ENCODE measurements at regions of chr1 and their contacts with region 1.

Region 1: DNA sequence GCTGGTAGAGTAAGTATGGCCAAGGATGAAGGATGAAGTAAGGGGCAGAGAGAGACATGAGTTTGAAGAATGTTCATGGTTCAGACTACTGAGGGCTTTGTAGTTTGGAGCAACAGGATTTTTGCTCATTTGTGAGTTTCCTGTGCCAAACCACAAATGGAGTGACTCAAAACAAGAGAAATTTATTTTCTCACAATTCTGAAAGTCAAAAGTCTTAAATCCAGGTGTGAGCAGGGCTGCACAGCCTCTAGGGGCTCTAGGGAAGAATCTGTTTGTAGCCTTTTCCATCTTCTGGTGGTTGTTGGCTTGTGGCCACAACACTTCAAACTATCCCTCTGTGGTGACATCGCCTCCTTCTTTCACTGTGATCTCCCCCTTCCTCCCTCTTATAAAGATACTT is 58.9 kb downstream of the RHOU start:
- DNase-seq: peak; percentile 59
- H3K4me3 Mint-ChIP-seq: no peak overlapping the region
- H3K27ac Mint-ChIP-seq: no peak overlapping the region
- H3K4me1 Mint-ChIP-seq: peaks cover 25% of the 10 kb centered on the region
- H3K27me3 Mint-ChIP-seq: no peaks in the 10 kb centered on the region

Region 2: GRCh38 chr1:228734881-228735801 is 59.0 kb before region 1 on chr1 and contains the start of gene RHOU:
- CTCF ChIA-PET with region 1: interaction called, 31 read pairs
- POLR2A ChIA-PET with region 1: interaction called, 19 read pairs
- DNase-seq: peak; percentile 74
- H3K4me3 Mint-ChIP-seq: peak within 1 kb of the TSS; percentile 79
- H3K27ac Mint-ChIP-seq: peak within 1 kb of the TSS; percentile 42
- H3K4me1 Mint-ChIP-seq: peaks cover 20% of the 10 kb centered on the region
- H3K27me3 Mint-ChIP-seq: peaks cover 27% of the 10 kb centered on the region
- total RNA-seq, gene RHOU: 4.5 TPM

Region 3: GRCh38 chr1:228804671-228805413 is 10.7 kb after region 1 on chr1:
- CTCF ChIA-PET with region 1: interaction called, 16 read pairs
- POLR2A ChIA-PET with region 1: interaction called, 35 read pairs
- DNase-seq: peak; percentile 74
- H3K4me3 Mint-ChIP-seq: peak overlapping the region; percentile 53
- H3K27ac Mint-ChIP-seq: peak overlapping the region; percentile 87
- H3K4me1 Mint-ChIP-seq: peaks cover 53% of the 10 kb centered on the region
- H3K27me3 Mint-ChIP-seq: no peaks in the 10 kb centered on the region

Region 4: GRCh38 chr1:228810878-228811711 is 16.9 kb after region 1 on chr1:
- CTCF ChIA-PET with region 1: interaction called, 5 read pairs
- POLR2A ChIA-PET with region 1: interaction called, 17 read pairs
- DNase-seq: no peak
- H3K4me3 Mint-ChIP-seq: no peak overlapping the region
- H3K27ac Mint-ChIP-seq: peak overlapping the region; percentile 76
- H3K4me1 Mint-ChIP-seq: peaks cover 51% of the 10 kb centered on the region
- H3K27me3 Mint-ChIP-seq: no peaks in the 10 kb centered on the region

Region 5: GRCh38 chr1:228989992-228990827 is 196.0 kb after region 1 on chr1:
- CTCF ChIA-PET with region 1: no interaction called
- POLR2A ChIA-PET with region 1: no interaction called
- DNase-seq: no peak
- H3K4me3 Mint-ChIP-seq: no peak overlapping the region
- H3K27ac Mint-ChIP-seq: no peak overlapping the region
- H3K4me1 Mint-ChIP-seq: no peaks in the 10 kb centered on the region
- H3K27me3 Mint-ChIP-seq: peaks cover 8% of the 10 kb centered on the region

Measured in activated CD4-positive, alpha-beta memory T cell treated with anti-CD3 and anti-CD28 coated beads, Interleukin-2, amount 10 ng/mL, durations not matched to agents 7 days and 5 days (primary cell).